Mammary epithelial cell (primary cell): ENCODE measurements at regions of chr12 and their contacts with region 1.

Region 1: DNA sequence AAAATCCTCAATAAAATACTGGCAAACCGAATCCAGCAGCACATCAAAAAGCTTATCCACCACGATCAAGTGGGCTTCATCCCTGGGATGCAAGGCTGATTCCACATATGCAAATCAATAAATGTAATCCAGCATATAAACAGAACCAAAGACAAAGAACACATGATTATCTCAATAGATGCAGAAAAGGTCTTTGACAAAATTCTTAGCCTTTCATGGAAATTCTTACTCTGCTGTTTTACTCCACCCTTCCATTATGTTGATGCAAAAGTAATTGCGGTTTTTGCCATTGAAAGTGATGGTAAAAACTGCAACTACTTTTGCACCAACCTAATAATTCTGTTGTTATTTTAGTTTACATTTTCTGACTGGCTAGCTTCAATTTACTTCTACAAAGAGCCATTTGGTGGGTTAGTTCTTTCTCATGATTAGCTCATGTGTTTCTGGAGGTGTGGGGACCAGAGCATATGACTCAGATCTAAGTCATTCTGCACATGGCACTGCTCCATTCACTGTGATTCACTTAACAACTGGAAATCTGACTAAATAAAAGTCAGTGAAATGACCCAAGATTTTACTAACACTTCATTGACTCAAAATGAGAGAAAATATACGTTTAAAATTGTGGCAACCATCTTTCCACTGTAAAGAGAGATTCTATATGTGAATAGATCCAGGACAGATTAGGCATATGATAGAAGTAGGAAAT is 99.9 kb downstream of the TMTC3 start:
- DNase-seq: peak; percentile 95
- H3K4me3 ChIP-seq: no peak overlapping the region
- H3K27ac ChIP-seq: peak overlapping the region; percentile 83
- H3K4me1 ChIP-seq: peaks cover 38% of the 10 kb centered on the region
- H3K27me3 ChIP-seq: no peaks in the 10 kb centered on the region
- CTCF ChIP-seq: no peak

Region 2: GRCh38 chr12:88163371-88163770 is 78.6 kb before region 1 on chr12:
- CTCF ChIA-PET with region 1: no interaction called
- dilution Hi-C with region 1: no loop called
- in situ Hi-C with region 1: no loop called
- intact Hi-C with region 1: no loop called
- DNase-seq: no peak
- H3K4me3 ChIP-seq: no peak overlapping the region
- H3K27ac ChIP-seq: no peak overlapping the region
- H3K4me1 ChIP-seq: no peaks in the 10 kb centered on the region
- H3K27me3 ChIP-seq: no peaks in the 10 kb centered on the region
- CTCF ChIP-seq: no peak

Region 3: DNA sequence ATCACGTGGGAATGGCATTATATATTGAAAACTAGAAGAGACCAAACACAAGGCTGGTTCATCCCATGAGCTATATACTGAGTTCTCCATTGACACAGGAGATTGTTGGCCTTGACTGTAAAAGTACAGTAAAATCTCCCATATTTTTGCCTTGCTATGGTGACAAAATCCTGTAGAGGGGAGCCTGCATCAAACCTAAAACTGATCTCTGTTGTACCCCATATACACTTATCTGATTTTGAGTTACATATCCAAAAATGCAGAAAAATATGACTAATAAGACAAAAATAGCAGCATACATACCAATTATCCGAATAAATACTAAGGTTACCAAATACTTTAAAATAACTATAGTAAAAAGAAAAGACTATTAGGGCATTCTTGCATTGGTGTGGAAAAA is 39.5 kb before region 1 on chr12:
- CTCF ChIA-PET with region 1: no interaction called
- dilution Hi-C with region 1: loop called (anchors 5 kb)
- in situ Hi-C with region 1: no loop called
- intact Hi-C with region 1: no loop called
- DNase-seq: no peak
- H3K4me3 ChIP-seq: no peak overlapping the region
- H3K27ac ChIP-seq: no peak overlapping the region
- H3K4me1 ChIP-seq: no peaks in the 10 kb centered on the region
- H3K27me3 ChIP-seq: no peaks in the 10 kb centered on the region
- CTCF ChIP-seq: no peak